ENCODE measurements at regions of chr12 and their contacts with region 1.

Region 1: DNA sequence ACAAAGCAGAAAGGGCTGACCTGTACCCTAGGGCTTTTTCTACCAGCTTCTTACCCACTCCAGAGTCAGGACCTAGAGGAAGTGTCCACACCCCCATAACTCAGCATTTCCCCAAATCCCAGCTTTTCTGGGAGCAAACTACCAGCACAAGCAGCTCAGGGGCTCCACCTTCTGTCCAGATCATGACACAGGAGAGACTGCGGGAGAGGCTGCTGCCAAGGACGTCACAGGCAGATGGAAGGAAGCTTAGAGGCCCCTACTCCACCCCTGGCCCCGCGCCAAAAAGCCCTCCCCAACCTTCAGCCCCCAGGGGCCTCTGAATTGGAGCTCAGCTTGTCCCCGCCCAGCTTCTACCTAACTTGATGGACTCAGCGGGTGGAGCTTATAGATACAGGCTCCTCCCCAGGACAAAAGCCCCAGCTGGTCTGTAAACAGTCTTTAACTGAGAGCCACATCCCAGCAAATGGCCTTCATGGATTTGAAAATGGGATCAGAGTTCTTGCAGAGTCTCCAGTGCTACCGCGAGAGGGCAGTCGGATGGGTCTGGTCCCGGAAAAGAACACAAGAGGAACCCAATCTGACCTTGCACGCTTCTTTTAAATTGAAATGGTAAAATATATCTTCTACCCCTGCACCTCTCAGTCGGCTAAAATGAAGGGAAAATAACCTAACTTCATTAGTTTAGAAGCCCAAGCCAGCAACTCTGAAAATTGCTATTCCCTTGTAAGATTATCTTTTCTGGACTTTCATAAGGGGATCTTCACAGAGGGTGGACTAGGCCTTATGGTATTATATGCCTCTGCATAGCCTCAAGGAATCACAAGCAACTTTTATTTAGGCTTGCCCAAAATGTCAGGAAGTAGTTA is 6.8 kb upstream of the BAZ2A start:
- DNase-seq: peak; percentile 98 to 99 (median 99)
- ATAC-seq: peak; percentile 81
- H3K4me3 ChIP-seq: no peak overlapping the region
- H3K27ac ChIP-seq: peak overlapping the region; percentile 94 to 98 (median 94)
- H3K4me1 ChIP-seq: peaks cover 56% of the 10 kb centered on the region
- H3K27me3 ChIP-seq: no peaks in the 10 kb centered on the region
- CTCF ChIP-seq: peak; percentile 40 to 77 (median 71)
- POLR2A ChIP-seq: peak in 2 of 3 donors; percentile 43 to 51

Region 2: DNA sequence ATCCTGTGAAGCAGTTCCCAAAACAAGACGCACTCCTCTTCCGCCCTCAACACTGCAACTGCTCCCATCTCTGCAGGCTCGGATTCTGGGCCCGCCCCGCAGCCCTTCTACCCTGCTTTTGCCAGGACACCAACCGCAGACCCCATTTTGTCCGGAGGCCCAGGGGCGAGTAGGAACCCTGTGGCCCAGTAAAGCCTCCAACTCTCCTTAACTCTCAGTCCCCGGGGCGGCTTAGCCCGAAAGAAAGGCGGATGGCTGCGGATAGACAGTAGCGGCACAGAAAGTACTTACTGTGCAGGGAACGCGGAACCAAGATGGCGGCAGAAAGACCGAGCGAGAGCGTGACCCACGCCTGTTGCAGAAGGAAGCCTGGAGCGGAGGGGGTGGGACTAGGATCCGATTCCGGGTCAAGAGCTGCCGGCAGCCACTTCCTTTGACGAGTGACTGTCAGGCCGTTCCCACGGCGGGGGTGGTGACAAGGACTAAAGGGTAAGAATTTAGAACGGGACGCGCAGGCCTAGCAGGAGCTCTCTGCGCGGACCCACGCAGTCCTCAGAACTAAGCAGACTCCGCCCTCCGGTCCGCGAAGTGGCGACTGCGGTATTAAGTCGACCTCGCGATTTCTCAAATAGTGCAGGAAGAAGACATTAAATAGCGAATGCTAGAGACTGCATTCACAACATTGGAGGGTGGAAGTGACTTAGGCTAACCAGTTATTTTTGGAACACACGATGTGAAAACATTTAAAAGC is 88.2 kb after region 1 on chr12 and contains the start of gene NACA:
- intact Hi-C with region 1: loop called (anchors 10 kb)
- DNase-seq: peak; percentile 96 to 99 (median 98)
- ATAC-seq: peak; percentile 98
- H3K4me3 ChIP-seq: peak within 1 kb of the TSS; percentile 44 to 51
- H3K27ac ChIP-seq: peak within 1 kb of the TSS; percentile 80 to 93 (median 86)
- H3K4me1 ChIP-seq: peaks cover 44% of the 10 kb centered on the region
- H3K27me3 ChIP-seq: no peaks in the 10 kb centered on the region
- CTCF ChIP-seq: no peak
- POLR2A ChIP-seq: peak; percentile 77 to 96 (median 95)
- total RNA-seq, gene NACA: 465 to 734 TPM

Region 3: GRCh38 chr12:56792678-56793077 is 155.8 kb after region 1 on chr12:
- intact Hi-C with region 1: no loop called
- DNase-seq: no peak
- ATAC-seq: no peak
- H3K4me3 ChIP-seq: no peak overlapping the region
- H3K27ac ChIP-seq: no peak overlapping the region
- H3K4me1 ChIP-seq: no peaks in the 10 kb centered on the region
- H3K27me3 ChIP-seq: no peaks in the 10 kb centered on the region
- CTCF ChIP-seq: no peak
- POLR2A ChIP-seq: no peak

Region 4: DNA sequence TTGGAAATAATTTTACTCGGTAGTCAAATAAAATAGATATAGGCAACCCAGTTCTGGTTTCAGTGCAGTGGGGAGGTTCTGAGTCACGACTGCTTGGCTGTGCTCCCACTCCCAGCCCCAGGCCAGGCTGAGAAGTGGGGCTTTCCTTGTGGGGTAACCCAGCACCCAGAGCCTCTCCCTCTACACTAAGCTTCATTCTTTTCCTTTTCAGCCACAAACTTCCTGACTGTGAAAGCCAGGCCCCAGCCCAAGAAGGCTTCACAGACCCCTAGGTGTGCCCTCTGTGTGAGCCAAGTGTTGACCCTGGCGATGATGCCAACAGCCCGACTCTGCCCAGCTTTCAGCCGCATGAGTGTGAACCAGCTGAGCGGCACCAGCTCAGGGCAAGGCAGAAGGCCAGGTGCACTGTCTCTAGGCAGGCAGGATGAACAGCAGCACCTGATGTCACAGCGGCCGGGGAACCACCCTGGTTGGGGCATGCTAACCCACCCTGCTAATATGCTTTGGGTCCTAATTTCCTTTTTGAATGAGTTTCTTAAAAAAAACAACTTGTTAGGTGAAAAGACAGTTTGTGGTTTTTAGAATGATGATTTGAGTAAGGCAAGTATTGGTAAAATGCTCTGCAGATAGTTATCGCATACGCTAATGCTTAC is 1262.2 kb after region 1 on chr12:
- intact Hi-C with region 1: no loop called
- DNase-seq: peak in 3 of 4 donors; percentile 13 to 62 (median 30)
- ATAC-seq: no peak
- H3K4me3 ChIP-seq: no peak overlapping the region
- H3K27ac ChIP-seq: peak overlapping the region in 2 of 4 donors; percentile 12 to 31
- H3K4me1 ChIP-seq: peaks cover 45% of the 10 kb centered on the region
- H3K27me3 ChIP-seq: no peaks in the 10 kb centered on the region
- CTCF ChIP-seq: no peak
- POLR2A ChIP-seq: no peak

Measured in body of pancreas (tissue), 4 donors.